ENCODE measurements at regions of chr16 and their contacts with region 1.

Region 1: DNA sequence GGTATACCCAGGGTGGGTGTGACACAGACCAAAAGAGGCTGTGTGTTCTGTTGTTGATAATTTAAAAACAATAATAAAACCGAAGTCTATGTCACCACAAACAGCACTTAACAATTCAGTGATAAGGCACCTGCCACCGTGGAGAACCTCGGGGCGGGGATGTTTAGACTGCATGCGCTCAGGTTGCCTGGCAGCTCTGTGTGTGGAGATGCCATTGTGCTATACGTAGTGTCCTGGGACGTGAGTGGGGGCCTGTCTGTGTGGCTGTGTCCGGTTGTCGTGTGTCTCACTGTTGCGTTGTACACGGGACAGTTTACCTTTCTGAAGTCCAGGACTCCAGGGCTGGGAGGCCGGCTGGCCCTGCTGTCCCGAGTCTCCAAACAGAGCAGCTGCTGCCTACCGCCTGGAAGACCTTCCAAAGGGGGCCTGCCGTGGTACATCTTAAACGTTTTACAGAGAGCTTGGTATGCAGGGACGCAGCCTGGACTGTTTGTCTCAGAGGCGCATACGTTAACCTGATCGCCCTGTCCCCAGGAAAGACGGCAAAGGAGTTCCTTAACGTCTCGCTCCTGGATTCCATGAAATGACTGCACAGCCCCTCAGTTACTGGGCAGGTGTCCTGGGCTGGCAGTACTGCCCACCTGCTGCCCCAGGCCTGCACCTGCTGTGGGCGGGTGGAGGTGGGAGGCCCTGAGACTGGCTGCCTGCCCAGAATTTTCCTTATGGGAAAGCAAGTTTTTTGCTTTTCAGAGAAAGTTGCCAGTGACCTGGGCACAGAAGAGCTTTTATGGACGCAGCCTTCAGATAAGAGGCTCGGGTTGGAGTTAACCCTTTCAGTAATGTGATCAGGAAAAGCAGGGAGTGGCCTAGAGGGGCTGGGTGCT is 19.0 kb downstream of the SPIRE2 start:
- DNase-seq: no peak

Region 2: DNA sequence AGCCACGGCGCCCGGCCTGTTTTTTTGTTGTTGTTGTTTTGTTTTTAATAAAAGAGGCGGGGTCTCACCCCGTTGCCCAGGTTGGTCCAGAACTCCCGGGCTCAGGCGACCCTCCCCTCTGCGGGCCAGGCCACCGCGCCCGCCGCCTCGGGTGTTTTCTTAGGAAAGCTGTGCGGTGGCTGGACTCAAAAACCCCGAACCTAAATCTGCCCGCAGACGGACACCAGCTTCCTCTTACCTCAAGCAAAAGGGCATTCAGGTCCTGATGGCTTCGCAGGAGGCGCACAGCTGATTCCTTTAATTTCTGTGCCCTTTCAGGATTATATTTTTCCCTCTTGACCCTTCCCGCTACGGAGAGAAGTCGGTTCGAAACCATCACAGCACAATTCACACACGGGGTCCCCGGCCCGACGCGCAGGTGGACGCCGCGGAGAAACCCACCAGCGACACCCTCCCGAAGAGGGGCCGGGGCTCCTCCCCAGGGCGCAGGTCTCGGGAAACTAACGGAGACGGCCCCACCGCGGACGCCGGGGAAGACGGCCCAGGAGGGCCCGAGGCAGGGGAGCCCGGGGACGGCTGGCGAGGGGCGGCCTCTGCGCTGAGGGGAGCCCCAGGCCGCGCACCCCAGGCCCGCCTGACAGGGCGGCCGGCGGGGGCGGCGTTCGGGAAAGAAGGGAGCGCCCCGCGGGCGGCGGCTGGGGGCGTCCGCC is 31.5 kb before region 1 on chr16:
- CTCF ChIA-PET with region 1: interaction called, 11 read pairs
- POLR2A ChIA-PET with region 1: no interaction called
- DNase-seq: no peak

Region 3: GRCh38 chr16:89860747-89861304 is 13.5 kb after region 1 on chr16:
- CTCF ChIA-PET with region 1: no interaction called
- POLR2A ChIA-PET with region 1: no interaction called
- DNase-seq: peak; percentile 84

Measured in HEK293T (cell line).